Dendritic cell treated with granulocyte-macrophage colony-stimulating factor and Interleukin-4, amounts not matched to agents 40 ng/mL and 50 ng/mL, for 4 days (primary cell): ENCODE measurements at regions of chr7 and their contacts with region 1.

Region 1: GRCh38 chr7:118153551-118154177 is 30.3 kb upstream of the LSM8 start:
- H3K4me3 Mint-ChIP-seq: no peak overlapping the region
- H3K27ac Mint-ChIP-seq: no peak overlapping the region
- H3K4me1 Mint-ChIP-seq: no peaks in the 10 kb centered on the region
- H3K27me3 Mint-ChIP-seq: peaks cover 17% of the 10 kb centered on the region

Region 2: DNA sequence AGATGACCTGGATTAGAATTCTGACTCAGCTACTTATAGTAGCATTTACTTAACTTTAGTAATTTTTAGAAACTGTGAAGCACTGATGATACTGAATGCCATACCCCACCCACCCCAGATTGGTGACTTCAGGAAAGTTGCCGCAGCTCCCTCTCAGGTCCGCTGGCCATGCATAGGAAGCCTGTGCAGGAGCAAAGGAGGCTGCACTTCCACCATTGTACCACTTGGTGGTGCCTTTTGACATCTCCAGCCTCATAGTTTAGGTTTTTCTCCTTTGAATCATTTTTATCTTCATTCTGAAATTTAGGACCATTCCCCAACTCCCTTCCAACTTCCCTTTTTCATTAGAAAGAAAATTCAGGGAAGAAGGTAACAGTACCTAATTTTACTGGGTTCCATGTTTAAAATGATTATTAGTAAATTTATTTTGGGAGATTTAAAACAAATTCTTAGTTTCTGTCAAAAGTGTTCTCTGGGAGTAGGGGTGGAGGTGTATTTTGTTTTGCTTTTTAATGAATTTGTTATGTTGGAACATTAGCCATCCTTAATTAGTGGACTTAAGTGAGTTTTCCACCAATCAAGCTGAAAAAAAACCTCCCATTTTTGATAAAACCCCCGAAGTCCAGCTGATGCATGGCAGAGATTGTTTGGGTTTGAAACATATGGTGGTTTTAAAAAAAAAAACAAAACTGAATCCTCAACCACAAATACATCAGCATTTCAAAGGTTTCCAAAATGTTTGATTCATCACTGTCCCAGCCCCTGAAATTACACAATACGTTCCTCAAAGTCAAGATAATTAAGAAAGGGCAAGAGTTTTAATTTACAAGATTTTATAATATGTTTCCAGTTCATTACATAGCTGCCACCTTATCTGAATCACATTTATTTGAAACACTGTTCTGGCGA is 940.4 kb before region 1 on chr7:
- intact Hi-C with region 1: loop called (anchors 2 kb)
- H3K4me3 Mint-ChIP-seq: no peak overlapping the region
- H3K27ac Mint-ChIP-seq: no peak overlapping the region
- H3K4me1 Mint-ChIP-seq: peaks cover 10% of the 10 kb centered on the region
- H3K27me3 Mint-ChIP-seq: no peaks in the 10 kb centered on the region

Region 3: DNA sequence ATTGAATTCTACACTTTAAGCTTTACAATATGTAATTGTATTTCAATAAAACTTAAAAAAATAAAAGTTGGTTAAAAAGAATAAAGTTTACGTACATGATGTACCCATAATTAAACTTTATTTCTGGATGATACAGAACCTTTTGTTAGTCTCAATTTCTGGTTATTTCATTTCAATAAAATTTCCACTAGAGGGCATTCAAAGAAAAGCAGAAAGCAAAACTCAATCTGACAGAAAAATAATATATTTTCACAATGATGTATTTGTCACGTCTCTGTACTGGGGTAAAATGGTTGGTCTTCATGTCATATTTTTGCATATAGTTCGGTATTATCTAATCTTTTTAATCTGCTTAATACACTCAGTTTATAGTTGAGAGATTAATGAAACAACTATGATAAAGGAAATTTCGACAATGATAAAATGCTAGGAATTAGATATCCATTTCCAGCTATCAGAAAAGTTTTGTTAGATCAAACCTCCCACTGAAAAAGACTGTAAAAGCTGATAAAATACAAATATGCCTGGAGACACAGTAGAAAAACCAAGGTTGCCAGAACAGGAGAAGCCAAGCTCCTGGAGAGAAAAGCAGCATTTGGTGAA is 753.7 kb before region 1 on chr7:
- intact Hi-C with region 1: loop called (anchors 5 kb)
- H3K4me3 Mint-ChIP-seq: no peak overlapping the region
- H3K27ac Mint-ChIP-seq: no peak overlapping the region
- H3K4me1 Mint-ChIP-seq: no peaks in the 10 kb centered on the region
- H3K27me3 Mint-ChIP-seq: no peaks in the 10 kb centered on the region

Region 4: DNA sequence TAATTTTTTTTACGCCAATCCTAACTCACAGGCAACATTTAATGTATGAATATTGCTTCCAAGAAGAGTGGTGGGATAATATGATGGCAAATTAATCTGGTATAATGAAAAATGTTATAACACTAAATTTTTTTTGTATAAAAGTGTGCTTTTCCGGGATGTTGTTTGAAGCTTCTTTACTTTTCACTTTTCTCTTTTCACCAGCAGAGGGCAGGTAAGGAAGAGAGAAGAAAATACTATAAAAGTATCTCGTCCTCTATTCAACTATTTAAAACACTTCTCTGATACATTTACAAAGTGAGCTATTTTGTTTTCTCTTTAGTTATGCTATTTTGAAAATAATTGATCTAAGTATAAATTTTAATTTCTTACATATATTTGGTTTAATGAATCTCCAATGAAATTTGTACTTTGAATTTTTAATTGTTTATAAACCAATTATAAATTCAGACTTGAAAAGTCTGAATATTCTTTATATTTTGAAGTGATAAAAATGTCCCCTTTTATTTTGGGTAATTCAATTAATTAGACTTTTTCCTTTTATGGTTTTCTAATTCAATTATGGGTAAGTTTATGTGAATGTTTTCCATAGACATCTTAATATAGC is 694.6 kb before region 1 on chr7:
- intact Hi-C with region 1: loop called (anchors 1 kb)
- H3K4me3 Mint-ChIP-seq: no peak overlapping the region
- H3K27ac Mint-ChIP-seq: no peak overlapping the region
- H3K4me1 Mint-ChIP-seq: no peaks in the 10 kb centered on the region
- H3K27me3 Mint-ChIP-seq: no peaks in the 10 kb centered on the region

Region 5: DNA sequence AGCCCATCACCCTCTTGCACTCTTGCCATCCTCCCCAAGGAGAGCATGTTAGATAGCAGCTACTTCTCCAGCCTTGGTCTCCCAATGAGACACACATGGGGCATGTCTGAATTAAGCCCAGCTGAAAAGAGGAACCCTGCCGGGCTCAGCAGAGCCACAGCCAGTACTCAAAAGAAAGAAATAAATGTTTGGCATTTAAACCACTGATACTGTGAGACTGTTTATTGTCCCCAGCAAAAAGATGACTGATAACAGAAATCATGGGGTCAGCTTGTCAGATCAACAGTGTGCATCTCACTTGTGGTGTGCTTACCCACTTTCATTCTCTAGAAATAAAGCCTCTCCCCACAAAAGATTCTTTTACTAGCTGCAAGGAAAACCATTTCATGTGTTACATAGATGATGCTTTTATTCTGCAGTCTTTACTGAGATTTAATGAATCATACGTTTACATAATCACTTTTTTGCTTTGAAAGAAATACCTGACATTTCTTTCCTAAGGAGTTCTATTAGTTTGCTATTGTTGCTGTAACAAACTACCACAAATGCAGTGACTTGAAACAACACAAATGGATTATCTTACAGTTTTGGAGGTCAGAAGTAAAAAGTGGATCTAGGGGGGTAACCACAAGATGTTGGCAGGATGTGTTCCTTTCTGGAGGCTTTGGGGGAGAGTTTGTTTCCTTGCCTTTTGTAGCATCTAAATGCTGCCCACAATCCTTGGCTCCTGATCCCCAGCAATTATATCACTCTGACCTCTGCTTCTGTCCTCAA is 91.8 kb after region 1 on chr7:
- intact Hi-C with region 1: no loop called
- H3K4me3 Mint-ChIP-seq: no peak overlapping the region
- H3K27ac Mint-ChIP-seq: no peak overlapping the region
- H3K4me1 Mint-ChIP-seq: no peaks in the 10 kb centered on the region
- H3K27me3 Mint-ChIP-seq: peaks cover 2% of the 10 kb centered on the region